Right ventricle myocardium inferior (tissue), 1 donor: ENCODE measurements at regions of chr11 and their contacts with region 1.

Region 1: DNA sequence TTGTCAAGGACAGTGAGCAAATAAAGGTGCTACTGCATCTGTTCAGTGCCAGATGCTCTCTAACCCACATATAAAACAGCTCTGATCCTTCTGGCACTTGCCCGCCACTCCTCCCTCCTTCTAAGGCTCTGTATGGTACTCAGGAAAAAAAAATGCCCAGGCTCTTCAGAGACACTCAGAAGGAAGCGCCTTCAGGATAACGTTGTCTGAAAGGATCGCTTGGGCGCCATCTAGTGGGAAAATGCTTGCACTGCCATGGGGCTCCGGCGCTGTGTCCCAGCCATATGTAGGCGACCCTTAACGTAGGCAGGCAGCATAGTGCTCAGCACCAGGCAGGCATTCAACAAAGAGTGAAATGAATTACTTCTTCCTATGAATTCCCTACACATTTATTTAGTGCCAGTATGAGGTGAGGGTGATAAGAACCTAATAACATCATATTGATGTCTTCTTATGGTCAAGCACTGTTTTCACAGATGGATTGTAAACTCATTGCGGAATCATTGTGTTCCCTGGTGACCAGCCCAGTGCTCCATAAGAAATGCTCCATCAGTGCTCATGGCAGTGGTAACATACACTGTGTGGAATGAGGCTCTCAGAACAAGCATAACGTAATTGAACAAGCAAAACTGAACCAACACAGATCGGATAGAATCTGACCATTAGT is 39.6 kb downstream of the PAMR1 start:
- DNase-seq: peak; percentile 80
- ATAC-seq: peak; percentile 81

Region 2: GRCh38 chr11:34926101-34926830 is 559.5 kb before region 1 on chr11:
- intact Hi-C with region 1: loop called (anchors 10 kb)
- DNase-seq: no peak
- ATAC-seq: peak; percentile 52

Region 3: DNA sequence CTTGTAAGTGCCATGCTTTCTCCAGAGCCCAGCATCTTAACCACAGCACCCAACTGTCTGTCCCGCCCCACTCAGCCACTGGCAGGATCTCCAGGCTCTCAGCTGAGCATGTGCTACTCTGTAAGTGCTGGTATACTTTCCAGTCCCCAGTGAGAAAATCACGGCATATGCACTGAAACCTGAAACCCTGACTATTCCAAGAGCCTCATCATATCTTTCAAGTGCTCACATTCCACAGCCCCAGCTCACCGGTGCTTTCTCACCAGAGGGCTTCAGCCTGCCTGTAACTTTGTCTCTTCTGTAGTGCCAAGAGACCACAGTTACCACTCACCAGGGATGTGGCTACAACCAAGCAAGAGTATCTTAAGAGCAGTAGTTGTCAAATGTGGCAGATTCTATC is 64.0 kb after region 1 on chr11:
- intact Hi-C with region 1: loop called (anchors 10 kb)
- DNase-seq: no peak
- ATAC-seq: no peak

Region 4: GRCh38 chr11:35605711-35606110 is 119.9 kb after region 1 on chr11:
- intact Hi-C with region 1: loop called (anchors 5 kb)
- DNase-seq: peak; percentile 70
- ATAC-seq: peak; percentile 87

Region 5: GRCh38 chr11:36265793-36266628 is 780.2 kb after region 1 on chr11:
- intact Hi-C with region 1: loop called (anchors 5 kb)
- DNase-seq: no peak
- ATAC-seq: peak; percentile 65